ENCODE measurements at regions of chr11 and their contacts with region 1.

Region 1: GRCh38 chr11:1309498-1310317 is at the start of gene TOLLIP:
- DNase-seq: peak; percentile 96 to 98
- ATAC-seq: peak; percentile 95 to 99 (median 98)
- H3K4me3 ChIP-seq: peak within 1 kb of the TSS; percentile 50 to 94 (median 85)
- H3K27ac ChIP-seq: peak within 1 kb of the TSS; percentile 74 to 97 (median 93)
- H3K4me1 ChIP-seq: peaks cover 5 to 55% (median 37%) of the 10 kb centered on the region in 9 donors
- H3K27me3 ChIP-seq: no peaks in the 10 kb centered on the region
- CTCF ChIP-seq: peak in 7 of 9 donors; percentile 12 to 63 (median 29)
- total RNA-seq, gene TOLLIP: 34.3 to 53.6 (median 45.2) TPM

Region 2: DNA sequence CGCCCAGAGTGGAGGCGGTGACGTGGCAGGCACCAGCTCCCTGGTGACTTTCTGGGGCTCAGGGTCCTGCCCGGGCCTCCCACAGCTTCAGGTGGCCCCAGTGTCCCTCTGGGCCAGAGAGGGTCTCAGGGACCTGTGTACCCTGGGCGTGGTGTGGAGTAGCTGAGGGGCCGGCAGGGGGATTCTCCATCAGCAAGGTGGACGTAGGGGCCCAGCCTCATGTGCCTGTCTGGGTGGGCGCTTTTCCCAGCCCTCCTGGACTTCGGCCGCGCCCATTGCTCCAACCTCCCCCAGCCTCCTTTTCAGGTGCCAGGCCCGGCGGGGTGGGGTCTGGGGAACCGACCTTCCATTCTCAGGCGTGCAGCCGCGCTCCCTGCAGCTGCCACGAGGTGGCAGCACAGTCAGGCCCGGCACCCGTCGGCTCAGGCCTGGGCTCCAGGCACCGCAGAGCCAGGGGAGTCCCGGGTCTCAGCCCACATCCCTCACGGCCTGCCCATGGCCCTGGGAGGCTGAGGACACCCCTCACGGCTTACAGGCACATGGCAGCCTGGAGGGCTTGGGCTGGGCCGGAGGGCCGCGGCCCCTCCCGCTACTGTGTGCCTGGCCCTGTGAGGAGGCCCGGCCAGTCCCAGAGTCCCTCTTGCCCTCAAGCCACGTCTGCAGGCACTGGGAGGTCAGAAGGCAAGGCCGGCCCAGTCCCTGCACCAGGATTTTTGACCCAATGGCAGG is 106.8 kb before region 1 on chr11:
- intact Hi-C with region 1: loop called in 1 of 10 experiments (anchors 5 kb)
- DNase-seq: peak; percentile 23 to 64
- ATAC-seq: peak; percentile 67 to 85 (median 74)
- H3K4me3 ChIP-seq: no peak overlapping the region
- H3K27ac ChIP-seq: no peak overlapping the region
- H3K4me1 ChIP-seq: peaks cover 0 to 7% (median 3%) of the 10 kb centered on the region in 9 donors
- H3K27me3 ChIP-seq: peaks cover 0 to 47% (median 38%) of the 10 kb centered on the region in 7 donors
- CTCF ChIP-seq: peak; percentile 86 to 95 (median 92)

Region 3: GRCh38 chr11:1262172-1263006 is 47.3 kb before region 1 on chr11:
- intact Hi-C with region 1: loop called in 1 of 10 experiments (anchors 1 kb)
- DNase-seq: peak; percentile 89 to 92
- ATAC-seq: peak; percentile 91 to 97 (median 96)
- H3K4me3 ChIP-seq: peak overlapping the region; percentile 32 to 62 (median 54)
- H3K27ac ChIP-seq: peak overlapping the region in 9 of 10 donors; percentile 73 to 85 (median 79)
- H3K4me1 ChIP-seq: peaks cover 4 to 17% (median 14%) of the 10 kb centered on the region in 9 donors
- H3K27me3 ChIP-seq: no peaks in the 10 kb centered on the region
- CTCF ChIP-seq: no peak

Region 4: DNA sequence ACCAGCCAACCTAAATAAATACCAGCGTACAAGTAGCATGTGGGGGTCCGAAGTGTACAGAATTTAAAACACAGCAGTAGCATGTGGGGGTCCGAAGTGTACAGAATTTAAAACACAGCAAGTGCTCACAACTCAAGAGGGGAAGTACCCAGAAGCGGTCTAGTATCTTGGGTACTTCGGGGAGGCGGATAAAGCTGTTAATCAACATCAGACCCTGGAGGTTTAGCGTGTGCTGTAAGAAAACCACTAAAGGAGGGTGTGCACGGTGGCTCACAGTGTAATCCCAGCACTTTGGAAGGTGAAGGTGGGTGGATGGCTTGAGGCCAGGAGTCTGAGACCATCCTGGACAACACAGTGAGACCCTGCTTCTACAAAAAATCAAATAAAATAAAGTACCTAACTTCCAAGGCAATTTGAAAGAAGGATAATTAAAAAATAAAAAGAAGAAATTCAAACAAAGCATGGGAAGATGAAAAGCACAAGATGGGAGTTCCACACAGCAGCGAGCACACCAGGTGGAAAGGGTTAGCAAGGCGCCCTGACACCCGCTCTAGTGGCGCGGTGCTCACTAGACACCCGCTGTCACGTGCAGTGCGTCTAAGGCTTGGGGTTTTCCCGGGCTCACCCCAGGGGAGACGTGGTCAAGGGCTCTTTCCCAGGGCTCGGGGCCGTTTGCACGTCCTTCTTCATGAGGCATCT is 211.8 kb after region 1 on chr11:
- intact Hi-C with region 1: loop called in 6 of 10 experiments (anchors 10 kb)
- DNase-seq: no peak
- ATAC-seq: no peak
- H3K4me3 ChIP-seq: no peak overlapping the region
- H3K27ac ChIP-seq: peak overlapping the region in 1 of 10 donors; percentile 43
- H3K4me1 ChIP-seq: peaks cover 14 to 97% (median 59%) of the 10 kb centered on the region in 9 donors
- H3K27me3 ChIP-seq: no peaks in the 10 kb centered on the region
- CTCF ChIP-seq: no peak

Measured in heart right ventricle (tissue), 16 donors.